ENCODE measurements at regions of chr6 and their contacts with region 1.

Region 1: GRCh38 chr6:33271458-33272274 is at the starts of genes RPS18 and VPS52:
- DNase-seq: peak; percentile 98
- H3K4me3 ChIP-seq: peak within 1 kb of the TSS; percentile 94
- H3K27ac ChIP-seq: peak within 1 kb of the TSS; percentile 94
- H3K27me3 ChIP-seq: no peaks in the 10 kb centered on the region
- CTCF ChIP-seq: no peak
- polyA plus RNA-seq, gene RPS18: 5,380 and 5,823 TPM in 2 replicates
- polyA plus RNA-seq, gene VPS52: 58.0 and 60.4 TPM in 2 replicates

Region 2: GRCh38 chr6:33288921-33289748 is 17.5 kb after region 1 on chr6 and contains the starts of genes PFDN6 and WDR46:
- CTCF ChIA-PET with region 1: interaction called, 4 read pairs
- POLR2A ChIA-PET with region 1: interaction called, 18 read pairs
- DNase-seq: peak; percentile 60
- H3K4me3 ChIP-seq: peak within 1 kb of the TSS; percentile 89
- H3K27ac ChIP-seq: peak within 1 kb of the TSS; percentile 39
- H3K27me3 ChIP-seq: no peaks in the 10 kb centered on the region
- CTCF ChIP-seq: no peak
- polyA plus RNA-seq, gene PFDN6: 59.6 and 64.6 TPM in 2 replicates
- polyA plus RNA-seq, gene WDR46: 43.3 and 44.7 TPM in 2 replicates

Region 3: DNA sequence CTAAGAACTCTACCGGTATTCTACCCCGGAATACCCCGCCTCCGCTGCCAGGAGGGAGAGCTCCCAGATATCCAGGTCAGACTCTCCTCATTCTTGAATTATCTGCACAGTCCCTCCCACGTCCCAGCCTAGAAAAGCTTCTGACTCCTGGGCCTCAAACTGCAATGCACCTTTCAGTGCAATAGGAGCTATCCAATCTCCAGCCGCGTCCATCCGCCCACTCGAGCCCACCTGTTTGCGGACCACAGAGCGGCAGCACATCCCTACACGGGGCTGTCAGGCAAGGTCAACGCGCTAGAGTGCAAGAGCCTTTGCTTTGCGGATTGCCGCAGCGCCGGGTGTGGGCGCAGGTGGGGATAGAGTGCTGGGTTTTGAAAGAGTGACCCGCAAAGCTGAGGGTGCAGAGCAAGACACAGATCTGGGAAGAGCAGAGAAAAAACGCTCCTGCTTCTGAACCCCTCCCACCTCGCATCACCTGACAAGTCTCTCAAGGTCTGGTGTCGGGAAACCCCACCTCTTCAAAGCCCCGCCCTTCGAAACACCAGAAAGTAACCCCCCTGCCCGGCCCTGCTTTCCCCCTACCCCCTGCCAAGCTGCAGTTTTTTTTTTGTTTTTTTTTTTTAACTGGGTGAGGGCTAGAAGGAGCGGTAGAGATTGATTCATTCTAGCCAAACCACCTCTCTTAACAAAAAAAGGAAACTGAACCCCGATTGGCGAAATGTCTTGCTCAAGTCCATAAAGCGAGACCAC is 40.9 kb after region 1 on chr6:
- CTCF ChIA-PET with region 1: no interaction called
- POLR2A ChIA-PET with region 1: interaction called, 12 read pairs
- DNase-seq: no peak
- H3K4me3 ChIP-seq: peak overlapping the region; percentile 95
- H3K27ac ChIP-seq: peak overlapping the region; percentile 94
- H3K27me3 ChIP-seq: no peaks in the 10 kb centered on the region
- CTCF ChIP-seq: 0 out of 2 replicates have a peak, but pooled peaks have one; percentile 4

Region 4: GRCh38 chr6:33317669-33318425 is 46.2 kb after region 1 on chr6 and contains the start of gene ZBTB22:
- CTCF ChIA-PET with region 1: no interaction called
- POLR2A ChIA-PET with region 1: interaction called, 12 read pairs
- DNase-seq: peak; percentile 98
- H3K4me3 ChIP-seq: peak within 1 kb of the TSS; percentile 78
- H3K27ac ChIP-seq: peak within 1 kb of the TSS; percentile 72
- H3K27me3 ChIP-seq: no peaks in the 10 kb centered on the region
- CTCF ChIP-seq: no peak
- polyA plus RNA-seq, gene ZBTB22: 8.4 and 11.8 TPM in 2 replicates